ENCODE measurements at regions of chr15 and their contacts with region 1.

Region 1: DNA sequence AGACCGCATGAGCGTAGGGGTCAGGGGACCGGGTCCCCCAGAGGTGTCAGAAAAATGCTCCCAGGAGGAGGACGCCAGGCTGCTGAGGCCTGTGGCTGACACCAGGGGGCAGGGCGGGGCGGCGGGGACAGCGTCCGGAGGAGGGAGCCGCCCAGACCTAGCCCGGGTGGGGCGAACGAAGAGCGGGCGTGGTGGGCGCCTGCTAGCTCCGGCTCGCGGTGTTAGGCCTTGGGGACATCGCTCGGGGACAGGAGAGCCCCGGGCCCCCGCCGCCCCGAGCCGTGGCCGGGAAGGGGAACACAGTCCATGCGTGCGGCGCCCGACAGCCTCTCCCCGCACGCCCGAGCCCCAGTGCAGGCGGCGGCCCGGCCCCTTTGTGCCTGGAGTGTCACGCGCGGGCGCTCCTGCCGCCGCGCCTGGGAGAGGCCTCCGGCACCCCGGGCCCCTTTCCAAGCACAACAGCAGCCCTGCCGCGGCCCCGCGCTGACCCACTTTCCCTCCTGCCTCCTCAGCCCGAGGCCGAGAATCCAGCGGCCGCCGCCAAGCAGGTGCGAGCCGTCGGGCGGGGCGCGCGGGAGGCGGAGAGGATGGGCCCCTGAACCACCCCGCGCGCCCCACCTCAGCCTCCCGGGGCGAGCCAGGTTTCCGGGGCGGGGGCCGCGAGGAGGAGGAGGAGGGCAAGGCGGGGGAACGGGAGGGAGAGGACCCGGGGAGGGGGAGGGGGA is 111.0 kb upstream of the KLF13 start:
- DNase-seq: peak; percentile 54
- ATAC-seq: peak; percentile 87
- H3K4me3 ChIP-seq: peak overlapping the region; percentile 54 to 68 (median 66); a peak in 5 of 6 replicates
- H3K27ac ChIP-seq: peak overlapping the region; percentile 85
- H3K4me1 ChIP-seq: peaks cover 22% of the 10 kb centered on the region
- H3K27me3 ChIP-seq: no peaks in the 10 kb centered on the region
- CTCF ChIP-seq: peak; percentile 92
- EP300 ChIP-seq: no peak
- POLR2A ChIP-seq: 0 out of 4 replicates have a peak, but pooled peaks of 1 of the 2 experiments have one; percentile 53
- RAD21 ChIP-seq: peak; percentile 93

Region 2: GRCh38 chr15:31236184-31237042 is 20.8 kb after region 1 on chr15:
- CTCF ChIA-PET with region 1: no interaction called
- POLR2A ChIA-PET with region 1: interaction called, 10 read pairs
- in situ Hi-C with region 1: no loop called
- intact Hi-C with region 1: no loop called
- DNase-seq: peak; percentile 64
- ATAC-seq: peak; percentile 92
- H3K4me3 ChIP-seq: peak overlapping the region; percentile 33 to 66 (median 55)
- H3K27ac ChIP-seq: no peak overlapping the region
- H3K4me1 ChIP-seq: peaks cover 21% of the 10 kb centered on the region
- H3K27me3 ChIP-seq: peaks cover 0 to 2% of the 10 kb centered on the region in 2 experiments; a peak in 1 of 5 replicates
- CTCF ChIP-seq: peak; percentile 11; the same call in 1 of the 2 replicates
- EP300 ChIP-seq: no peak
- POLR2A ChIP-seq: no peak
- RAD21 ChIP-seq: no peak

Region 3: DNA sequence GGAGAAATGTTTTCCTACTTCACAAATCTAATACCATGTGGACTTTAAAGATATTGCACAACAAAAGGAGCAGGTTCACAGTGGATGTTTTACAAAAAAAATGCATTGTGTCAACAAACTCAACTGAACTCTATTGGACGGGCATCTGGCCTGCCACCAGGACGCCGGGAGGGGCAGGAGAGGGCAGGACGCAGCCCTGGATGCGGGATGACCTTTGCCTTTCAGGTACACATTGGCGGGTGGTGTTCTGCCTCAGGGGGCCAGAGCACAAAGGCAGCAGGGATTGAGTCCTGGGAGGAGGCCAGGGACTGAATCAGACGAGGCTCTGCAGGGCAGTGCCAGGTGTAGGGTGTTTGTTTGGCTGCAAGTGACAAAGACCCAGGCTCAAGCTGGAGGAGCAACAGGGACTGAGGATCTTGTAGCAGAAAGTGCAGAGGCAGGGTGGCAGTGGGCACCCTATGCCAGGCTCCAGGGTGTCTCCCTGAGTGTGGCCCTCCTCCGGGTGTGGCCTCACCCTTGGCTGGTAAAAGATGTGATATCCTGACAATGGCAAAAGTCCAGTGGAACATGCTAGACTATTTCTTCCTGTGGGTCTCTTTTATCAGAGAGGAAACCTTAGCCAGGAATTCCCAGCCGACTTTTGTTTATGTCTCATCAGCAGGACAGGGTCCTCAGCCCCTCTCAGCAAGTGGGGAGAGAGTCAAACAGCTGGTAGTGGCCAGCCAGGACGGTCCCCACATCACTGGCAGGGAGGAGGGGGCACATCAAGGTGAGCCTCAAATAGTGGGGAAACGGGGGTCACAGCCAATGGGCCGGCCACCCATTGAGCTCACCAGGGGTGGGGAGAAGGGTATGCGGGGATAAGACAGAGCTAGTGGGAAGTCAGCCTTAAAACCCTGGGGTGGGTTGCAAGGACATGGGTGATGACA is 81.3 kb after region 1 on chr15:
- CTCF ChIA-PET with region 1: no interaction called
- POLR2A ChIA-PET with region 1: interaction called, 6 read pairs
- in situ Hi-C with region 1: no loop called
- intact Hi-C with region 1: loop called (anchors 2 kb)
- DNase-seq: peak; percentile 97
- ATAC-seq: peak; percentile 94
- H3K4me3 ChIP-seq: peak overlapping the region in 1 of 3 experiments; percentile 38; a peak in 3 of 6 replicates
- H3K27ac ChIP-seq: peak overlapping the region; percentile 81
- H3K4me1 ChIP-seq: peaks cover 95% of the 10 kb centered on the region
- H3K27me3 ChIP-seq: no peaks in the 10 kb centered on the region
- CTCF ChIP-seq: peak; percentile 41
- EP300 ChIP-seq: peak; percentile 78 to 91; a peak in 3 of 4 replicates
- POLR2A ChIP-seq: peak; percentile 45 to 50; a peak in 2 of 4 replicates
- RAD21 ChIP-seq: peak; percentile 57

Region 4: DNA sequence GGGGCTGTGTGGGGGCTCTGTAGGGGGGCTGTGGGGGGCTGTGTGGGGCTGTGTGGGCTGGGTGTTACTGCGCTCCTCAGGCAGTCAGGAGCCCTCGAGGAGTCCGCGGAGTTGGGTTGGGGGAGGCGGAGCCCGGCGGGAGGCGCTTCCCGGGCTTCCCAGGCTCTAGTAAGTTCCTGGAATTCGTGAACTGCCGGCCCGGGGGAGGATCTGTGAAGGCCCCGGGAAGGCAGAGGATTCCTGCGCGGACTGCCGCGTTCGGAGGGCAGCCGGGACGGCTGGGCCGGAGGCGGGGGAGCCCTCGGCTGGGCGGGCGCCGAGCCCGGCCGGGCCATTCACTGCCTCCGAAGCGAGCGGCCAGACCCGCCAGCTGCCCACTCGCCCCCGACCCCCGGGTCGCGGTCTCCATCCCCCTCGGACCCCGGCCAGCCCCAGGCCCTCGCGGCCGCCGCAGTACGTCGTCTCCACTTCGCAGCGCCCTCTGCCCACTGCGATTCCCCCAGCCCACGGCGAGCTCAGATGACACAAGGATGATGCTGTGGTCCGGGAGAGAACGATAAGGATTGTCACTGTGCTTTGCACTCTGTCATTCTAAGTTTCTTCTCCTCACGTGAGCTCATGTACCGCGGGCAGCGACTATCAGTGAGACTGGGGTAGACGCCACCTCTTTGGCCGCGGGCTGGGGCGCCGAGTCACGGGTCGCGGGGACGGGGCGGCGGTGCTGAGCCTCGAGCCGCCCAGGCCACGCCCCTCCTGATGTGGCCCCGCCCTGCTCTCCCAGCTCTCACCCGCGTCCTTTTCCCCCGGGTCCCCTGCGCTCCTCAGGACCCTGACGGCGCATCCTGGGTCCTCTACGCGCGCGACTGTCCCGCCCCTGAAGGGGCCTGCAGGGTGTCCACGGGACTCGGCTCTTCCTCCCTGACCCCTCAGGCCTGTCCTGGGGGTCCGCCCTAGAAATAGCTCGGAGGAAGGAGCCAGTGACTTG is 176.3 kb after region 1 on chr15:
- CTCF ChIA-PET with region 1: no interaction called
- POLR2A ChIA-PET with region 1: interaction called, 3 read pairs
- in situ Hi-C with region 1: no loop called
- intact Hi-C with region 1: loop called (anchors 5 kb)
- DNase-seq: no peak
- ATAC-seq: peak; percentile 75
- H3K4me3 ChIP-seq: peak overlapping the region; percentile 45 to 77 (median 63)
- H3K27ac ChIP-seq: no peak overlapping the region
- H3K4me1 ChIP-seq: peaks cover 32% of the 10 kb centered on the region
- H3K27me3 ChIP-seq: peaks cover 2 to 18% of the 10 kb centered on the region in 2 experiments; a peak in 2 of 5 replicates
- CTCF ChIP-seq: peak; percentile 18; the same call in 1 of the 2 replicates
- EP300 ChIP-seq: no peak
- POLR2A ChIP-seq: no peak
- RAD21 ChIP-seq: no peak

Region 5: GRCh38 chr15:31488426-31489204 is 273.0 kb after region 1 on chr15:
- CTCF ChIA-PET with region 1: interaction called, 11 read pairs
- POLR2A ChIA-PET with region 1: no interaction called
- in situ Hi-C with region 1: no loop called
- intact Hi-C with region 1: loop called (anchors 5 kb)
- DNase-seq: peak; percentile 64
- ATAC-seq: peak; percentile 86
- H3K4me3 ChIP-seq: no peak overlapping the region
- H3K27ac ChIP-seq: no peak overlapping the region
- H3K4me1 ChIP-seq: no peaks in the 10 kb centered on the region
- H3K27me3 ChIP-seq: no peaks in the 10 kb centered on the region; a peak in 2 of 5 replicates
- CTCF ChIP-seq: peak; percentile 70
- EP300 ChIP-seq: no peak
- POLR2A ChIP-seq: no peak
- RAD21 ChIP-seq: peak; percentile 52; the same call in 1 of the 2 replicates